ENCODE measurements at regions of chr12 and their contacts with region 1.

Region 1: GRCh38 chr12:46442239-46442638 is 69.7 kb upstream of the SLC38A2 start:
- DNase-seq: peak; percentile 64
- ATAC-seq: peak; percentile 43
- H3K4me3 ChIP-seq: peak overlapping the region; percentile 50
- H3K27ac ChIP-seq: peak overlapping the region; percentile 97
- H3K4me1 ChIP-seq: peaks cover 75% of the 10 kb centered on the region
- H3K27me3 ChIP-seq: no peaks in the 10 kb centered on the region
- CTCF ChIP-seq: no peak

Region 2: DNA sequence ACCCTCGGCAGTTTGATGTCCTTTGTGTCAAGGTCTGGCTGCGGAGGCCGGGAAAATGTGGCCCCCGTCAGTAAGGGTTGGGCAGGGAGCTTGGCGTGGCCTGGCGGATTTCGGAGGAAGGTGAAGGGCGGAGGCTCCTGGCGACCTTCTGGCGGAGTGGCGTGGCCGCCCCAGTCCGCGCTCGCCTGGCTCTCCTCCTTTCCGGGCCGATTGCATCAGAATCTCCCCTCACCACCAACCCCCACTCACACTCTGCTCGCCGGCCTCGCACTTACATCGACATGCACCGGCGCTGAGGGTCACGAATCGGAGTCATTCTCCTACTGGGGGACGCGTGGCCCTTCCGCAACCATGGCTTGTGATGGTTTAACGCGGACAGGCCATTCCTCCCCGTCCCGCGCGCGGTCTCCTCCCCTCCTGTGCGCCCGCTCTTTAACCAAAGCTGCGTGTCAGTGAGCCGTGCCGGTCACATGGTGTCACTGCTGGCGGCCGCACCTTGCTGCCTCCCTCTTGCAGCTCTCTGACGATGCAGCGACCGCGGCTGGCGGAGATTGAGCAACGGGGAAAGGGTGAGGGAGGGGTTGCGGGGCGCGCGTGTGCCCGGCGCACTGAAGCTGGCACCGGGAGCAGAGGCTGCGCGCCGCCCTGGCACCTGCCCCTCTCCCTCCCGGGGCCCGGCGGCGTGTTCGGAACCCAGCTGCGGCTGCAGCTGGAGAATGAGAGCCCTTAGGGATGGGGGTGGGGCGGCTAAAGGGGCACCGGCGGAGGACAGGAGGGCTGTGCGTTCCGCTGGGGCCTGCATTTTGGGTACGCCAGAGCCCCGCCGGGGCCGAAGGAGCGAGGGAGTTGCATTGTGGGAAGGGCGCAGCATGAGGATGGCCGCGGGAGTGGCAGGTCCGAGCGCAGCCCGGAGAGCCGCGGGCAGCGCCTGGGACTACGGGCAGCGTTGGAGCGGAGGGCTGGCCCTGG is 173.4 kb before region 1 on chr12 and contains the start of gene SLC38A1:
- CTCF ChIA-PET with region 1: no interaction called
- POLR2A ChIA-PET with region 1: interaction called, 4 read pairs
- intact Hi-C with region 1: loop called (anchors 2 kb)
- DNase-seq: peak; percentile 91
- ATAC-seq: peak; percentile 68
- H3K4me3 ChIP-seq: peak within 1 kb of the TSS; percentile 85
- H3K27ac ChIP-seq: peak within 1 kb of the TSS; percentile 81
- H3K4me1 ChIP-seq: peaks cover 39% of the 10 kb centered on the region
- H3K27me3 ChIP-seq: no peaks in the 10 kb centered on the region
- CTCF ChIP-seq: no peak
- total RNA-seq, gene SLC38A1: 101 and 107 TPM in 2 replicates

Region 3: GRCh38 chr12:46492471-46493351 is 50.5 kb after region 1 on chr12:
- CTCF ChIA-PET with region 1: no interaction called
- POLR2A ChIA-PET with region 1: no interaction called
- intact Hi-C with region 1: loop called (anchors 2 kb)
- DNase-seq: peak; percentile 89
- ATAC-seq: peak; percentile 53
- H3K4me3 ChIP-seq: no peak overlapping the region
- H3K27ac ChIP-seq: peak overlapping the region; percentile 43
- H3K4me1 ChIP-seq: peaks cover 48% of the 10 kb centered on the region
- H3K27me3 ChIP-seq: no peaks in the 10 kb centered on the region
- CTCF ChIP-seq: no peak

Region 4: GRCh38 chr12:46556105-46556559 is 113.9 kb after region 1 on chr12:
- CTCF ChIA-PET with region 1: no interaction called
- POLR2A ChIA-PET with region 1: interaction called, 4 read pairs
- intact Hi-C with region 1: loop called (anchors 2 kb)
- DNase-seq: peak; percentile 93
- ATAC-seq: peak; percentile 76
- H3K4me3 ChIP-seq: peak overlapping the region; percentile 41
- H3K27ac ChIP-seq: peak overlapping the region; percentile 96
- H3K4me1 ChIP-seq: peaks cover 87% of the 10 kb centered on the region
- H3K27me3 ChIP-seq: no peaks in the 10 kb centered on the region
- CTCF ChIP-seq: no peak

Region 5: DNA sequence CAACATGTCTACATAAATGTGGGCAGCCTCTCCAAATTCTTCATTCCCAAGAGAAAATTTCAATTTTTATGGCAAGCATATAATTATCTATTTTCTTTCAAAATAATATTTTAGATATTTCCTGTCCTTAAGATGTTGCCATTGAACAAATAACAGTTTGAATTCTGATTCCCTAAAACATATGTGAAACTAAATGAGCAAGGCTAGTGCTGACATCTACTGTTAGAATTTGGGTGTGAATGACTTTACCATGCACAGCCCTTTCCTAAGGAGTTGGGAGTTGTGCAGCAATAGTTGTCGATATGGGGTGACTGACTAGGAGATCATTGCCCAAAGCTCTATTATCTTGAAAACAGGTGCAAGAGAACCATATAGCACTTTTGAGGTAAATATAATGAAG is 491.7 kb after region 1 on chr12:
- CTCF ChIA-PET with region 1: no interaction called
- POLR2A ChIA-PET with region 1: no interaction called
- intact Hi-C with region 1: loop called (anchors 10 kb)
- DNase-seq: peak; percentile 77
- ATAC-seq: peak; percentile 93
- H3K4me3 ChIP-seq: no peak overlapping the region
- H3K27ac ChIP-seq: no peak overlapping the region
- H3K4me1 ChIP-seq: peaks cover 12% of the 10 kb centered on the region
- H3K27me3 ChIP-seq: no peaks in the 10 kb centered on the region
- CTCF ChIP-seq: peak; percentile 76